ENCODE measurements at regions of chr11 and their contacts with region 1.

Region 1: DNA sequence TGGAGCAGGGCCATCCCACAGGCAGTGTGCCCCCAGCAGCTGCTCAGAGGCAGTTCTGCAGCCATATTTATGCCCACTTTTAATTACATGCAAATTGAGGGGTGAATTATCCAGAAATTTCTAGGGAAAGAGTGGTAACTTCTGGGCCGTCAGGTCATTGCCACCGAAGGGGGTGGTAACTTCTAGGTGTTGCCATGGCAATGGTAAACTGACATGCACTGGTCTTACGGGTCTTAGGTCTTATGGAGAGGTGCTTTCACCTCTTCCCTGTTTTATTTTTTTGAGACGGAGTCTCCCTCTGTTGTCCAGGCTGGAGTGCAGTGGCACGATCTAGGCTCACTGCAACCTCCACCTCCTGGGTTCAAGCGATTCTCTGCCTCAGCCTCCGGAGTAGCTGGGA is 3.8 kb upstream of the TMEM134 start:
- DNase-seq: no peak
- H3K4me3 ChIP-seq: no peak overlapping the region
- H3K27ac ChIP-seq: no peak overlapping the region
- H3K4me1 ChIP-seq: no peaks in the 10 kb centered on the region
- H3K27me3 ChIP-seq: no peaks in the 10 kb centered on the region
- CTCF ChIP-seq: no peak
- POLR2A ChIP-seq: no peak

Region 2: DNA sequence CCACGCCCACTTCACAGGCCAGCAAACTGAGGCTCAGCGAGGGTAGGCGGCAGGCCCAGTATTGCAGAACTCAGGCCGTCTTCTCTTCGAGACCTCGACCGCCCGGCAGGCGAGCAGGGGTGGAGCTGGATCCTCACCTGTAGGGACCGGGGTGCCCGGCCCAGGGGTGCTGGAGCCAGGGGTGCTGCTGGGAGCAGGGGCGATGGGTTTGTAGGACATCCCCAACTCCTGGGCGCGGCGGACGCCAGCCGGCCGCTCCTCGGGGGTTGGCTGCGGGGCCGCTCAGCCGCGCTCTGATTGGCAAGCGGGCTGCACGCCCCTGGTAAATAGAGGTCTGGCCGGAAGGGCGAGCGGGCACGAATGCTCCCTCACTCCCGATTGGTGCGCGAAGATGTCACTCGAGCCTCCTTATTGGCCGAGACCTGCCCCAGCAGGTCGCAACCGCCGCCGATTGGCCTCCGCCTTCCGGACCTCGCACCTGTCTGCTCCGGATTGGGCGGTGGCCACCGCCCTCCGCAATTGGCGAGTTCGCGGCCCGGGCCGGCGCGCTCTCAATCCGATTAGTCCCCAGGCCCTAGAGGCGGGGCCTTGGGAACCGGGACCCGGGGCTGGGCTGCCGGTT is 35.1 kb after region 1 on chr11 and contains the start of gene CDK2AP2:
- intact Hi-C with region 1: loop called (anchors 2 kb)
- DNase-seq: peak; percentile 99
- H3K4me3 ChIP-seq: peak within 1 kb of the TSS; percentile 55 to 82 (median 77)
- H3K27ac ChIP-seq: peak within 1 kb of the TSS; percentile 98
- H3K4me1 ChIP-seq: peaks cover 17 to 27% of the 10 kb centered on the region in 2 donors
- H3K27me3 ChIP-seq: no peaks in the 10 kb centered on the region
- CTCF ChIP-seq: no peak
- POLR2A ChIP-seq: peak; percentile 44
- total RNA-seq, gene CDK2AP2: 32.1 to 35.4 (median 32.8) TPM

Region 3: GRCh38 chr11:68168694-68169093 is 695.8 kb after region 1 on chr11:
- intact Hi-C with region 1: no loop called
- DNase-seq: no peak
- H3K4me3 ChIP-seq: no peak overlapping the region
- H3K27ac ChIP-seq: no peak overlapping the region
- H3K4me1 ChIP-seq: no peaks in the 10 kb centered on the region
- H3K27me3 ChIP-seq: no peaks in the 10 kb centered on the region
- CTCF ChIP-seq: no peak
- POLR2A ChIP-seq: no peak

Measured in breast epithelium (tissue), 4 donors.